AG04449 (cell line): ENCODE measurements at regions of chr12 and their contacts with region 1.

Region 1: DNA sequence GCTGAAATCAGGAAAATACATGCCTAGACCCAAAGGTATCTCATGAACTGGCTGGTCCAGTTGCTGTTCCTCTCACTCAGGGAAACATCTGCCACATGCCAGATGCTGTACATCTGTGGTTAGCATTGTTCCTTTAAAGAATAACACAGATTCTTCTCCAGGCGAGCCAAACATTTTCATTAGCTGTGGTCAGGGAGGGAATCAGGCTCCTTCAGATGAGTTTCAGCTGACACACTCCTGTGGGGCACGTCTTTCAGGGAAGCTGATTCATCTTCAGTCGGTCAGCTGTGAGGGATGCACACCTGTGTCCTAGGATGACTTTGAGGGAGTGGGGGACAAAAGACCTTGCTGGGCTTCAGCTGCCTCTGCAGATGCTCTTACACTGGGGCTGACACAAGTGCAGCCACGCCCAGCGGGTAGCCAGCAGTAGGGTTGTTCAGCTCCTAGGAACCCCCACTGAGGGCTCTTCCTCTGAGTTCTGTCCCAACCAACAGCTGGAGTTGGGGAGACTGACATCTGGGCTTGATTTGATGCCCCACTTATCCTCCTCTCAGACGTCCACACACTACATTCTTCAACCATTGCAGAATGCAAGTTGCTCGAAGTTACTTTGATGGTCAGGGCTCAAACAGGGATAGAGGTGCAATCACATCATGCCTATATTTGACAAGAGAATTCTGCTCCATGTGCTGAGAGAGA is 155.0 kb downstream of the NUAK1 start:
- DNase-seq: peak; percentile 65
- H3K4me3 ChIP-seq: no peak overlapping the region
- CTCF ChIP-seq: no peak

Region 2: GRCh38 chr12:105672121-105672975 is 311.4 kb before region 1 on chr12:
- CTCF ChIA-PET with region 1: no interaction called
- POLR2A ChIA-PET with region 1: no interaction called
- DNase-seq: no peak
- H3K4me3 ChIP-seq: no peak overlapping the region
- CTCF ChIP-seq: no peak

Region 3: GRCh38 chr12:105860565-105861207 is 123.1 kb before region 1 on chr12:
- CTCF ChIA-PET with region 1: no interaction called
- POLR2A ChIA-PET with region 1: no interaction called
- DNase-seq: no peak
- H3K4me3 ChIP-seq: no peak overlapping the region
- CTCF ChIP-seq: no peak

Region 4: DNA sequence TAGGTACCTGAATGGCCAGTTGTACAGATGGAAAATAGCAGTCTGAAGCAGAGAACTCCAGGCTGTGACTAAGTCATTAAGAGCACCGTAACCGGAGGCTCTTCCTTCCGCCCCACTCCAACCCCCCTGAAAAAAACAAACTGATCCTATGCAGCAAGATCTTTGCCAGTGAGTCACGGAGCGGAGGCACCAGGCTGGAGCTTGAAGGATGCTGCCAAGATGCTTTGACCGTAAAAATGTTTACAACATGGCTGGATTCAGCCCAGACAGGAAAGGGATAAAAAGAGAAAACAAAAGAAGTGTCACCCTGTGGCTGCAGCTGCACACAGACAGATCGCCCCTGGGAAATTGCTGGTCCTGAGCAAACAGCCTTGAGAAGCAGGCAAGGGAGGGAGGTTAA is 49.5 kb before region 1 on chr12:
- CTCF ChIA-PET with region 1: no interaction called
- POLR2A ChIA-PET with region 1: interaction called, 10 read pairs
- DNase-seq: peak; percentile 92
- H3K4me3 ChIP-seq: no peak overlapping the region
- CTCF ChIP-seq: no peak